Heart left ventricle (tissue), 16 donors: ENCODE measurements at regions of chr6 and their contacts with region 1.

Region 1: DNA sequence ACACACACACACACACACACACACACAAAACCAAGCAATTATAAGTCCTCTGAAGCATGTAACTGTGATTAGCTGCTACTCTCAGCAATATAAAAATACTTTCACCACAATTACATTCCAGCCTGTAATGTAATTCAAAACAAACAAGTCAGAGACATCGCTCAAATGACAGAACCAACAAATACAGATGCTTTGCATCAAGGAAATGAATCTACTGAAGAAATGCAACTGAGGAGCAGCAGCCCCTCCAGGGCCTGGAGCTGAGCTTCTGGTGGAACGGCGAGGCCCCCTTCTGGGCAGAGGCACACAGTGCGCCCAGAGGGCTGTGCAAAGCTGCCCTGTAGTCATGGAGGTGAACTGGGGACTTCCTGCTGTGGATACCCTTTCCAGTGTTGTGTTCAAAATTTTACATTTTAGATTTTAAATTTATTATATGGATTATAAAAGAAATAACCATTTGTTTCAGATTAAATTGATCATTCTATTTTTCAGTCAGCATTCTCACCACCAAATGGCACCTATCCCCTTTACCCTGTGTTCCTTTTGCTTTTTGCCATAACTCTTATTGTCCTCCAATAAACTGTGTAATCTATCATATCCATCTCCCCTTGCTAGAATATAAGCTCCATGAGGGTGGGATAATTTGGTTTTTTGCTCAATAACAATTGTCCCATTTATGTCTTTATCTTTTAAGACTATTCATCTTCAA is 23.2 kb downstream of the ADAT2 start:
- DNase-seq: peak; percentile 64 to 78 (median 70)
- ATAC-seq: peak; percentile 82 to 96 (median 95)
- H3K4me3 ChIP-seq: no peak overlapping the region
- H3K27ac ChIP-seq: no peak overlapping the region
- H3K4me1 ChIP-seq: no peaks in the 10 kb centered on the region
- H3K27me3 ChIP-seq: no peaks in the 10 kb centered on the region
- CTCF ChIP-seq: peak; percentile 81 to 97 (median 93)
- POLR2A ChIP-seq: no peak

Region 2: GRCh38 chr6:142474531-142475289 is 952.6 kb before region 1 on chr6:
- intact Hi-C with region 1: loop called (anchors 1 to 10 kb)
- DNase-seq: peak in 1 of 5 donors; percentile 51
- ATAC-seq: no peak
- H3K4me3 ChIP-seq: no peak overlapping the region
- H3K27ac ChIP-seq: no peak overlapping the region
- H3K4me1 ChIP-seq: peaks cover 0 to 7% (median 0%) of the 10 kb centered on the region in 12 donors
- H3K27me3 ChIP-seq: peaks cover 0 to 2% (median 0%) of the 10 kb centered on the region in 9 donors
- CTCF ChIP-seq: peak; percentile 74 to 89 (median 80)
- POLR2A ChIP-seq: no peak

Region 3: GRCh38 chr6:142566628-142567396 is 860.5 kb before region 1 on chr6:
- intact Hi-C with region 1: loop called in 4 of 10 experiments (anchors 2 to 10 kb)
- DNase-seq: peak in 3 of 5 donors; percentile 26 to 28 (median 28)
- ATAC-seq: peak in 3 of 4 donors; percentile 54 to 59 (median 58)
- H3K4me3 ChIP-seq: no peak overlapping the region
- H3K27ac ChIP-seq: no peak overlapping the region
- H3K4me1 ChIP-seq: peaks cover 0 to 22% (median 7%) of the 10 kb centered on the region in 12 donors
- H3K27me3 ChIP-seq: no peaks in the 10 kb centered on the region
- CTCF ChIP-seq: peak; percentile 66 to 90 (median 82)
- POLR2A ChIP-seq: no peak

Region 4: GRCh38 chr6:142935553-142936517 is 491.4 kb before region 1 on chr6:
- intact Hi-C with region 1: loop called in 1 of 10 experiments (anchors 10 kb)
- DNase-seq: no peak
- ATAC-seq: no peak
- H3K4me3 ChIP-seq: peak overlapping the region in 1 of 12 donors; percentile 16
- H3K27ac ChIP-seq: peak overlapping the region in 1 of 12 donors; percentile 14
- H3K4me1 ChIP-seq: peaks cover 3 to 54% (median 20%) of the 10 kb centered on the region in 12 donors
- H3K27me3 ChIP-seq: no peaks in the 10 kb centered on the region
- CTCF ChIP-seq: no peak
- POLR2A ChIP-seq: no peak

Region 5: GRCh38 chr6:142952614-142953013 is 474.6 kb before region 1 on chr6:
- intact Hi-C with region 1: loop called in 1 of 10 experiments (anchors 10 kb)
- DNase-seq: no peak
- ATAC-seq: no peak
- H3K4me3 ChIP-seq: no peak overlapping the region
- H3K27ac ChIP-seq: no peak overlapping the region
- H3K4me1 ChIP-seq: peaks cover 0 to 14% (median 0%) of the 10 kb centered on the region in 12 donors
- H3K27me3 ChIP-seq: no peaks in the 10 kb centered on the region
- CTCF ChIP-seq: no peak
- POLR2A ChIP-seq: no peak

Region 6: DNA sequence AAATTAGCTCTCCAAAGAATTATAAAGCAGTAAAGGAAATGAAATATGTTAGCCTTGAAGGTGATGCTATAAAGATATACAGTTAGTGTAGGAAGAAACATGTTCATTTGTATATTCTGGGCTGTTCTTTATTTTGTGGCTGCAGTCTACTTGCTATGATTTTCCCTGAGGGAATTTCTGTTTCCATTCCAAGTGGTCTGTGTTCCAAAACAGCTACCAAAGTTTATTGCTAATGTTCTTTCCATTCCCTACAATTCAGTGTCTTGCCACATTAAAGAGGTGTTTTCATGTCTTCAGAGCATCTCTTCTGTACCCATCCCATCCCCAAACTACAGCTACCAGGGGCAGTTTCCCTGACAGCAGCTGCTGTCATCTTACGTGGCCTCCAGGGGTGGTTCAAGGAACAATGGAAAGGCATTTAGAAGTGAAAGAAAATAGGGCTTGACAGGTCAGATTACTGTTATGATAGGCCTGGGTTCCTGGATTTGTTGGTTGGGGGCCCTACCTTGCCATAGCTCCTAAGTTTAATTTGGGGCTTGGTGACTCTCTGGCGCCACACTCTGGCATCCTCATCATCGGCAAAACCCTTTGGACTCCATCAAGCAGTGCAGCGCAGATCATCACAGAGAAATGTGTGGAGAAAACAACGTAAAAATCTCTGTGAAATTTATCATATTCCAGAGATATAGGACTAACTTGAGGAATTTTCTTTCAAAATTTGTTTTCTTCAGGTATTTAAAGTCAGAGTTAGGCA is 400.4 kb before region 1 on chr6:
- intact Hi-C with region 1: loop called in 1 of 10 experiments (anchors 2 kb)
- DNase-seq: peak in 4 of 5 donors; percentile 23 to 38 (median 36)
- ATAC-seq: peak in 3 of 4 donors; percentile 65 to 78 (median 68)
- H3K4me3 ChIP-seq: no peak overlapping the region
- H3K27ac ChIP-seq: no peak overlapping the region
- H3K4me1 ChIP-seq: no peaks in the 10 kb centered on the region
- H3K27me3 ChIP-seq: no peaks in the 10 kb centered on the region
- CTCF ChIP-seq: peak; percentile 55 to 76 (median 66)
- POLR2A ChIP-seq: no peak

Region 7: DNA sequence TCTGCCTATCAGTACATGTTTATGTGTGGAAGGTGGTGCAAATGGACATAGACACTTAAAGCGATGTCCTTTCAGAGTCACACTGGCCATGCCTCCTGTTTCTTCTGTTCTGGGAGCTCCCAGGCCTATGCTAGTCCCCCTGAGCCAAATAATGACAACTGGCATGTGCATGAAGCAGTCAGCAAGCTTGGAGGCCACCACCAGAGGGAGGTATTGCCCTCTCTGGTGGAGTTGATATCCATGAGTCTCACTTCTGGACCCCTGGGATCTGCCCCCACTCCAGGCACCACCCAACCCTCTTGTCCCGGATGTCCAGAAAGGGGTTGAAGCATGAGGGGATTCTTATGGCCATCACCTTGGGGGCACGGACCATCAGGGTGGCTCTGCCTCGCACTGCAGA is 194.4 kb before region 1 on chr6:
- intact Hi-C with region 1: loop called in 3 of 10 experiments (anchors 5 to 10 kb)
- DNase-seq: peak in 3 of 5 donors; percentile 16 to 28 (median 21)
- ATAC-seq: peak in 2 of 4 donors; percentile 53 to 55
- H3K4me3 ChIP-seq: no peak overlapping the region
- H3K27ac ChIP-seq: no peak overlapping the region
- H3K4me1 ChIP-seq: no peaks in the 10 kb centered on the region
- H3K27me3 ChIP-seq: no peaks in the 10 kb centered on the region
- CTCF ChIP-seq: peak in 11 of 12 donors; percentile 24 to 52 (median 36)
- POLR2A ChIP-seq: no peak

Region 8: GRCh38 chr6:143673669-143674068 is 246.4 kb after region 1 on chr6:
- intact Hi-C with region 1: no loop called
- DNase-seq: no peak
- ATAC-seq: no peak
- H3K4me3 ChIP-seq: no peak overlapping the region
- H3K27ac ChIP-seq: peak overlapping the region in 9 of 12 donors; percentile 0 to 98 (median 36)
- H3K4me1 ChIP-seq: peaks cover 0 to 45% (median 27%) of the 10 kb centered on the region in 12 donors
- H3K27me3 ChIP-seq: no peaks in the 10 kb centered on the region
- CTCF ChIP-seq: no peak
- POLR2A ChIP-seq: no peak